SK-N-SH (cell line): ENCODE measurements at regions of chr22 and their contacts with region 1.

Region 1: DNA sequence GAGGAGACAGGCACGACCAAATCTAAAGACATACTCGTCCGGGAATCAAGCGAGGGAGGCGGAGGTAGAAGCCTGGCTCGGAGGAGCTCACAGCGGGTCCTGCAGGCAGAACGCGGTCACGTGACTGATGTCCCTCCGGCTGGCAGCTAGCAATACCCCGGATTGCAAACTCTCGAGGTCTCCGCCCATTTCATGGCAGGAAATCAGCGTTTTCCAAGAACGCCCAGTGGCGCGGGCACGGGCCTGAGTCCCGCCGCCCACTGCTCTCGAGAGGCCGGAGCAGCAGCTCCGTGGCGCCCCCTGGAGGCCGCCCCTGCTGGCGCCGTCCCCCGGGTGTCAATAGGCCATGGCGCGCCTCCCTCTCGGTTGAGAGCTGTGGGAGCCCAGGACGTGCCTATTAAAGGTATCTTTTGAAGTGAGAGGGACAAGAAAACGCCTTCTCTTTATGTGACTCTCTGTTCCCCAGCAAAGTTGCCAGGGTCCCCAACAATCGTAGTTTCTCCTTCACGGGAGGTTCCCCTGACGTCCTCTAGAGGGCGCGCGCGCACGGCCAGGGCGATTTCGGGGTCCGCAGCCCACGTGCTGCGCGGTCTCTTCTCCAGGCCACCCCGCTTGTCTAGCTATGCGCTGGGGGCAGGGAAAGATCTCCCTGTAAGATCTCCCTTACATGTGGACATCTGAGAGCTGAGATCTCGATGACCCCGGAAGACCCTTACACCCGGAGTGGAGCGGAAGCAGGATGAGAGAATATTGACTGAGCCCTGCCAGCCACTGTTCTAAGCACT is 37.3 kb upstream of the RBFOX2 start:
- DNase-seq: peak; percentile 91
- H3K4me3 ChIP-seq: peak overlapping the region; percentile 47 to 63
- H3K27ac ChIP-seq: peak overlapping the region; percentile 62 to 92
- H3K4me1 ChIP-seq: peaks cover 4 to 20% of the 10 kb centered on the region in 2 experiments; a peak in 3 of 4 replicates
- H3K27me3 ChIP-seq: no peaks in the 10 kb centered on the region
- CTCF ChIP-seq: peak; percentile 100
- EP300 ChIP-seq: peak in 1 of 2 experiments; percentile 5; a peak in 1 of 4 replicates
- RAD21 ChIP-seq: peak; percentile 78

Region 2: GRCh38 chr22:35894937-35895708 is 170.8 kb before region 1 on chr22:
- CTCF ChIA-PET with region 1: interaction called, 23 read pairs
- POLR2A ChIA-PET with region 1: no interaction called
- DNase-seq: peak; percentile 29
- H3K4me3 ChIP-seq: no peak overlapping the region
- H3K27ac ChIP-seq: peak overlapping the region in 1 of 2 experiments; percentile 93; a peak in 2 of 4 replicates
- H3K4me1 ChIP-seq: peaks cover 50 to 57% of the 10 kb centered on the region in 2 experiments
- H3K27me3 ChIP-seq: no peaks in the 10 kb centered on the region
- CTCF ChIP-seq: no peak
- EP300 ChIP-seq: no peak
- RAD21 ChIP-seq: peak; percentile 10; the same call in 1 of the 2 replicates

Region 3: DNA sequence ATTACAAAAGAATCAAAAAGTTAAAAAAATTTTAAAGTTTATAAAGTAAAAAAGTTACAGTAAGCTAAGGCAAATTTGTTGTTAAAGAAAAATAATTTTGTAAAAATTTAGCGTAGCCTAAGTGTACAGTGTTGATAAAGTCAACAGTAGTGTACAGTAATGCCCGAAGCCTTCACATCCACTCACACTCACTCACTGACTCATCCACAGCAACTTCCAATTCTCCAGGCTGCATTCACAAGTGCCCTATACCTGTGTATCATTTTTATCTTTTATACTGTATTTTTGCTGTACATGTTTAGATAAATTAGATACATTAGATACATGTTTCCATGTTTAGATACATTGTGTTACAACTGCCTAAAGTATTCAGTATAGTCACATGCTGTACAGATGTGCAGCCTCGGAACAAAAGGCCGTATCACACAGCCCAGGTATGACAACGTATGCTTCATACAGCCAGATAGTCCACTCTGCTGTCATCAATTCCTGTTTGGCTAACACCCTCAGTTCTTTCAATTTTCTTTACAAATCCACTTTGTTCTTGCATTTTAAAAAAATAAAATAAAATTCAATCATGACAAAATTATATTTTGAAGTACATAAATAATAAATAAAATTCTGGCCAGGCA is 118.1 kb before region 1 on chr22:
- CTCF ChIA-PET with region 1: interaction called, 24 read pairs
- POLR2A ChIA-PET with region 1: no interaction called
- DNase-seq: no peak
- H3K4me3 ChIP-seq: no peak overlapping the region
- H3K27ac ChIP-seq: peak overlapping the region in 1 of 2 experiments; percentile 41; a peak in 1 of 4 replicates
- H3K4me1 ChIP-seq: peaks cover 6 to 13% of the 10 kb centered on the region in 2 experiments; a peak in 3 of 4 replicates
- H3K27me3 ChIP-seq: no peaks in the 10 kb centered on the region
- CTCF ChIP-seq: no peak
- EP300 ChIP-seq: no peak
- RAD21 ChIP-seq: no peak

Region 4: DNA sequence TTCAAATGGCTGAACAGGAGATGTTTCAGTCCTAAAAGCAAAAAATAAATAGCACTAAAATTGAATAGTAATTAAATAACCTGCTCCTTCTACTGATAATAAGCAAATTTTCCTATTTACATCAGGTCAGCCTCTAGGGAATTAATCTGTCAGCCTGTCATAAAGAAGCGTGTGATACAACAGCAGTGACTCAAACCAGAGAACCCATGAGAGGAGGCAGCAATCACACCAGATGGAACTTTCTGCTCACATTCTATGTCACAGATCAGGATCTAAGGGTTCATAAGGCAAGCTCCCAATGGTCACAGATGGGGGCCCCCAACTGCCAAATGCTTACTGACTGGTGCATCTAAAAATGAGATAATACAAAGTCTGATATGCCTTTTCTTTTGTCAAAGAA is 78.5 kb before region 1 on chr22:
- CTCF ChIA-PET with region 1: interaction called, 54 read pairs
- POLR2A ChIA-PET with region 1: no interaction called
- DNase-seq: peak; percentile 18
- H3K4me3 ChIP-seq: no peak overlapping the region
- H3K27ac ChIP-seq: peak overlapping the region; percentile 52 to 89; a peak in 2 of 4 replicates
- H3K4me1 ChIP-seq: peaks cover 35 to 43% of the 10 kb centered on the region in 2 experiments
- H3K27me3 ChIP-seq: no peaks in the 10 kb centered on the region
- CTCF ChIP-seq: no peak
- EP300 ChIP-seq: peak in 1 of 2 experiments; percentile 79; a peak in 2 of 4 replicates
- RAD21 ChIP-seq: 0 out of 2 replicates have a peak, but pooled peaks have one; percentile 4

Region 5: GRCh38 chr22:36028646-36029405 is 37.1 kb before region 1 on chr22 and contains the start of gene RBFOX2:
- CTCF ChIA-PET with region 1: interaction called, 59 read pairs
- POLR2A ChIA-PET with region 1: interaction called, 10 read pairs
- DNase-seq: peak; percentile 98
- H3K4me3 ChIP-seq: peak within 1 kb of the TSS; percentile 74 to 80
- H3K27ac ChIP-seq: peak within 1 kb of the TSS; percentile 75 to 90
- H3K4me1 ChIP-seq: peaks cover 3 to 10% of the 10 kb centered on the region in 2 experiments; a peak in 3 of 4 replicates
- H3K27me3 ChIP-seq: no peaks in the 10 kb centered on the region
- CTCF ChIP-seq: no peak
- EP300 ChIP-seq: no peak; a peak in 1 of 4 replicates
- RAD21 ChIP-seq: no peak; the same call in 1 of the 2 replicates
- polyA plus RNA-seq, gene RBFOX2: 115 and 151 TPM in 2 replicates

Region 6: GRCh38 chr22:36086170-36086490 is 20.2 kb after region 1 on chr22:
- CTCF ChIA-PET with region 1: interaction called, 38 read pairs
- POLR2A ChIA-PET with region 1: no interaction called
- DNase-seq: no peak
- H3K4me3 ChIP-seq: no peak overlapping the region
- H3K27ac ChIP-seq: no peak overlapping the region
- H3K4me1 ChIP-seq: peaks cover under 1 to 3% of the 10 kb centered on the region in 2 experiments; a peak in 1 of 4 replicates
- H3K27me3 ChIP-seq: no peaks in the 10 kb centered on the region
- CTCF ChIP-seq: no peak
- EP300 ChIP-seq: no peak
- RAD21 ChIP-seq: no peak

Region 7: GRCh38 chr22:36123673-36124630 is 58.0 kb after region 1 on chr22:
- CTCF ChIA-PET with region 1: interaction called, 53 read pairs
- POLR2A ChIA-PET with region 1: no interaction called
- DNase-seq: peak; percentile 92
- H3K4me3 ChIP-seq: no peak overlapping the region; a peak in 1 of 4 replicates
- H3K27ac ChIP-seq: peak overlapping the region; percentile 34 to 60; a peak in 2 of 4 replicates
- H3K4me1 ChIP-seq: peaks cover 0 to 3% of the 10 kb centered on the region in 2 experiments; a peak in 1 of 4 replicates
- H3K27me3 ChIP-seq: no peaks in the 10 kb centered on the region; the same call in 1 of the 2 replicates
- CTCF ChIP-seq: peak; percentile 95
- EP300 ChIP-seq: no peak
- RAD21 ChIP-seq: peak; percentile 100

Region 8: DNA sequence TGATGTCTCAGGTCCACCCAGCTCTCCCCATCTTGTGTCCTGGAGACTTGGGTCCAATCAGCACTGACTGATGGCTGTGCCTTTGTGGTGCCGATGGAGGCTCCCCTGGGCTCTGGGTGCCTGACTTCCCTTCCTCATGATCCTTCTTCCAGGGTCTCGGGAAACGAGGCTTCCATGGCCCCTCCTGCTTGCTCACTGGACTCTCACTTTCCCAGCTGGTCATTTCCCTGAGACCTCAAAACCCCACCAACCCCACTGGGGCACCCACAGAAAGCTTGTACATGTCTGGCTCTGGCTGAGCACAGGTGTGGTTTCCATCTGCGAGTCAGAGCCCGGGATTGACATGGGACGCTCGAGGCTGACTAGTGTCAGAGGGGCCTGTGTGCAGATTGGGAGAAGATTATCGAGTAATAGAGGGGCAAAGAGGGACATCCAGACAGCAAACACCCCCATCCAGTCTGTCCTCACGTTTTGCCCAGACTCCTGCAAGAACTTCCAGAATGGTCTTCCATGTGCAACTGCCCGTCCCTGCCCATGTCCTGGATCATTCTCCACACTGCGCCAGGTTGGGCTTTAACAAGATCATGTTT is 202.0 kb after region 1 on chr22:
- CTCF ChIA-PET with region 1: no interaction called
- POLR2A ChIA-PET with region 1: no interaction called
- DNase-seq: no peak
- H3K4me3 ChIP-seq: no peak overlapping the region
- H3K27ac ChIP-seq: no peak overlapping the region
- H3K4me1 ChIP-seq: no peaks in the 10 kb centered on the region
- H3K27me3 ChIP-seq: no peaks in the 10 kb centered on the region
- CTCF ChIP-seq: no peak
- EP300 ChIP-seq: no peak
- RAD21 ChIP-seq: no peak